ENCODE measurements at regions of chr20 and their contacts with region 1.

Region 1: DNA sequence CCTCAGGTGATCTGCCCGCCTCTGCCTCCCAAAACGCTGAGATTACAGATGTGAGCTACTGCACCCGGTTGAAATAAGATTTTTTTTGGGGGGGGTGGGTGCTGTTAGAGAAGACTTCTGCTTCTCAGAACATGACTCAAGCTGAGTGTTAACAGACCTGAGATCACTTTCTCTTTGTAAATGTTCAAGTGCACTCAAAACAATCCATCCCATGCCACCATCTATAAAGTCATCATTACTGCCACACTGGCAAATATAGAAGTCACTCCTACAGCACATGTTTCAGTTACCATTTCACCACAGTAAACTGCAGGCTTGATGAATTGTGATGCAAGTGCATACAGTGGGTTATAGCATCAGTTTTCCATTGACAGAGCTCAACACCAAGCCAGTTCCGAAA is 9.0 kb downstream of the VPS16 start:
- DNase-seq: no peak
- H3K4me3 ChIP-seq: no peak overlapping the region
- H3K27ac ChIP-seq: no peak overlapping the region
- H3K4me1 ChIP-seq: no peaks in the 10 kb centered on the region
- H3K27me3 ChIP-seq: no peaks in the 10 kb centered on the region
- CTCF ChIP-seq: no peak

Region 2: GRCh38 chr20:2756056-2756611 is 93.4 kb before region 1 on chr20:
- CTCF ChIA-PET with region 1: interaction called, 6 read pairs
- POLR2A ChIA-PET with region 1: no interaction called
- intact Hi-C with region 1: loop called (anchors 2 kb)
- DNase-seq: no peak
- H3K4me3 ChIP-seq: no peak overlapping the region
- H3K27ac ChIP-seq: no peak overlapping the region
- H3K4me1 ChIP-seq: peaks cover 5% of the 10 kb centered on the region
- H3K27me3 ChIP-seq: peaks cover 19% of the 10 kb centered on the region
- CTCF ChIP-seq: peak; percentile 61

Region 3: DNA sequence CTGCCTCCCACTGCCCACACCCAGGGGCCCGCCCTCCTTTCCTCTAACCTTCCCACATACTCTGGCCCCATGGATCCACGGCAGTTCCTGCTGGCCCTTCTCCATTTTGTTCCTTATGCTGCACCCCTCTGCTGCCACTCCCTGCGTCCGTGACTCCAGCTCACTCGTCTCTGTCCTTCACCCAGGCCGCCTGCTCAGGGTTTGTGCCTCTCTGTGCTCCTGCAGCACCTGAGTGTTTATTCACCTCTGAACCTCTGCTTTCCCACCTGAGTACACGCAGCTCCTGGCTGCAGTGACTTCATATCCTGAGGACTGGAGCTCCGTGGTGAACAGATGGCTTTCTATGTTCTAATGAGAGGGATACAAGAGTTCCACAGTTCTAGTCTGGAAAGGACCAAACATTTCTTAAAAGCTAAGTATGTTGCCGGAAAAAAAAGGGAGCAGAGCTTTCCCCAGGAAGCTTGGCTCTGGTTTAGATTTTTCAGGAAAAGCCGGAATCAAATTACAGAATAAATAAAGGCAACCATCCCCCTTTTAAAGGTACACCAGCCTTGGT is 192.4 kb after region 1 on chr20:
- CTCF ChIA-PET with region 1: no interaction called
- POLR2A ChIA-PET with region 1: no interaction called
- intact Hi-C with region 1: no loop called
- DNase-seq: no peak
- H3K4me3 ChIP-seq: no peak overlapping the region
- H3K27ac ChIP-seq: peak overlapping the region; percentile 29
- H3K4me1 ChIP-seq: peaks cover under 1% of the 10 kb centered on the region
- H3K27me3 ChIP-seq: no peaks in the 10 kb centered on the region
- CTCF ChIP-seq: no peak

Region 4: DNA sequence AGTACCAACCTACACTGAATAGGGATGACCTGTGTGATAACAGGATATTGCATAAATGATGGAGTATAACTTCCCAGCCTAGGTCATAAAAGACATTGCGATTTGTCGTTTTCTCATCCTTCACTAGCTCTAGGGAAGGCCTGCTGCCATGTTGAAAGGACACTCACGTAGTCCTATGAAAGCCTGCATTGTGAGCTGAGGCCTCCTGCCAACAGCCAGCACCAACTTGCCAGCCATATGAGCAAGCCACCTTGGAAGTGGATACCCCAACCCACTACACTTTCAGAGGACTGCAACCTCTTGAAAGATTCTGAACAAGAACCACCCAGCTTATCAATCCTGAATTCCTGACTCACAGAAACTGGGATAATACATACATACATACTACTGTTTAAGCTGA is 1036.2 kb after region 1 on chr20:
- CTCF ChIA-PET with region 1: no interaction called
- POLR2A ChIA-PET with region 1: no interaction called
- intact Hi-C with region 1: no loop called
- DNase-seq: no peak
- H3K4me3 ChIP-seq: no peak overlapping the region
- H3K27ac ChIP-seq: no peak overlapping the region
- H3K4me1 ChIP-seq: peaks cover 7% of the 10 kb centered on the region
- H3K27me3 ChIP-seq: no peaks in the 10 kb centered on the region
- CTCF ChIP-seq: no peak

Measured in A673 (cell line).